AG04449 (cell line): ENCODE measurements at regions of chr7 and their contacts with region 1.

Region 1: DNA sequence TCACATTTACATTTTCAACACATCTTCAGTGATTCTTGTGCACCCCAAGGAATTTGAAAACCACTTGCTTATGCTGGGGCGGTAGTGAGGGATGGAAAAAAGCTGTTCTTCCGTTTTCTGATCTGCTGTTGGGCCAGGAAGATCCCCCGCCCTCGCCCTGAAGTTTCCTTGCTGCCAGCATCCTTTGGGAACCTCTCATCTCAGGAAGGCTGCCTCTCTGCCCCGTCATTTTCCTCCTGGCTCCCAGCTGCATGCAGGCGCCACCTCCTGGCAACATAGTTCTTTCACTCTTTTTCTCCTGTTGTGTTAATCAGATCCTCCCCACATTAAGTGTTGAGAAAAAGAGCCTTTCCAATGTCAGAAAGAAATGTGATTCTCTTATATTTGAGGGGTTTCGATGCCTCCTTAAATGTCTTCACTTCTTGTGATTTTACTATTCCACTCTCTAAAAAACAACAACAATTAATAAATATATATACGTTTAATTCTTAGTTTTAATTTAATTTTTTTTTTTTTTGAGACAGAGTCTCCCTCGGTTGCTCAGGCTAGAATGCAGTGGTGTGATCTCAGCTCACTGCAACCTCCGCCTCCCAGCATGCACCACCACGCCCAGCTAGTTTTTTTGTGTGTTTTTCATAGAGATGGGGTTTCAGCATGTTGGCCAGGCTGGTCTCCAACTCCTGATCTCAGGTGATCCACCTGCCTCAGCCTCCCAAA is 122.9 kb downstream of the RALA start:
- DNase-seq: no peak
- H3K4me3 ChIP-seq: no peak overlapping the region
- CTCF ChIP-seq: peak; percentile 83

Region 2: GRCh38 chr7:39547336-39547735 is 198.9 kb before region 1 on chr7:
- CTCF ChIA-PET with region 1: no interaction called
- POLR2A ChIA-PET with region 1: no interaction called
- DNase-seq: no peak
- H3K4me3 ChIP-seq: no peak overlapping the region
- CTCF ChIP-seq: no peak

Region 3: GRCh38 chr7:39589323-39590111 is 156.7 kb before region 1 on chr7:
- CTCF ChIA-PET with region 1: interaction called, 24 read pairs
- POLR2A ChIA-PET with region 1: no interaction called
- DNase-seq: no peak
- H3K4me3 ChIP-seq: no peak overlapping the region
- CTCF ChIP-seq: no peak

Region 4: DNA sequence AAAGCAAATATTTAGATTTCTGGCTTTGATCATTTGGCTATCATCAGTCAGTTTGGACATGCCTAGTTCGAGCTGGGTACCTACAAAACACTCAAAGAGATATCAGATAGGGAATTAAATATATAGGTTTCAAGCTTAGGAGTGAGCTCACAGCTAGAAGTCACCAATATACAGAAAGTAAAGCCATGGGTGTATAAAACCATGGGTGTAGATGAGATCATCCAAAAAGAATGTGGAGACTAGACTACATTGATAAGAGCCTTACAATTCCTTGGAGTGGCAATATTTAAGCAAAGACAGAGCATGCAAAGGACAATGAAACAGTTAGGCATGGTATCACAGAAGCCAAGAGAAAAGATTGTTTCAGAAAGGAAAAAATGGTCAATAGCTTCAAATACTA is 130.1 kb before region 1 on chr7:
- CTCF ChIA-PET with region 1: interaction called, 11 read pairs
- POLR2A ChIA-PET with region 1: no interaction called
- DNase-seq: no peak
- H3K4me3 ChIP-seq: no peak overlapping the region
- CTCF ChIP-seq: no peak

Region 5: GRCh38 chr7:39623018-39623731 is 123.1 kb before region 1 on chr7 and contains the start of gene RALA:
- CTCF ChIA-PET with region 1: interaction called, 11 read pairs
- POLR2A ChIA-PET with region 1: no interaction called
- DNase-seq: peak; percentile 55
- H3K4me3 ChIP-seq: peak within 1 kb of the TSS; percentile 77
- CTCF ChIP-seq: no peak

Region 6: DNA sequence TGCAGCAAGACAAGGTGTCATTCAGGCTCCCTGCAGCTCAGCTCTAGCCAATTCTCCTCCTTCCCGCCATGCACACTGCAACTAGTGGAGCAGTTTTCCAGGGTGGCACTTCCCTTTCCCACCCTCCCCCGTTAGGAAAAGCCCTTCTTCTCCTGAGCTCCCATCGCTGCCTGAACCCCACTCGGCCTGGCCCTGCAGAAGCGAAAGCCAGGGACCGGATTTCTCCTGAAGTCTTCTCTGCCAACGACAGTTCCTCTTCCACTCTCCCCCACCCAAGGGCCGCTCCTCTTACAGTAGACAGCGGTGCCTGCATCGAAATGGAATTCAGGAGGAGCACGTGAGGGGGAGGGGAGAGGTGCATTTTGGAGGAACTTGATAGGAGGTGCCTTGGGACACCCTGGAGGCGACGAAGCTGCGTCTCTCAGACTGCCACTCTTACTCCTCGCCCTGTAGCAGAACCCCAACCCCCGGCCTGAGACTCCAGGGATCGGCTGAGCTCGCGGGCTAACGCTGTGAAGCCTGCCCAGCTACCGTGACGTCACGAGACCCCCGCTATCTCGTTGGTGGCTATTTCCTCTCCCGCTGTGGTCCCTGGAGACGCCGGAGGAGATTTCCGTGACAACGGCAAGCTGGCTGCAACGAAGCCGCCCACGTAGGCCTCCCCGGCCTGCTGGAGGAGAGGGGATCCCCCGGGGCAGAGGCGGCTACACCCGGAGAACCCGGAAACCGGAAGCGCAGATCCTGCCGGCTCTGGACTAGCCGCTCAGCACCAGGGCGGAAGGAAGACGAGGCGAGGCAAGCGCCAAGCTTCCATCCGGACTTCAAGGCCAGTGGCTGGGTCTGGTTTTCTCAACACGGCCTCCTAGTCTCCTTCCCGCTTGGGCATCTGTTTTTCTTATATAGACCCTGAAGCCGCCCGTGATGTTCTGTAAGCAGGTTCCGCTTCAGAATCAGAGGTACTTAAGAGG is 13.1 kb before region 1 on chr7:
- CTCF ChIA-PET with region 1: interaction called, 77 read pairs
- POLR2A ChIA-PET with region 1: interaction called, 3 read pairs
- DNase-seq: peak; percentile 79
- H3K4me3 ChIP-seq: peak overlapping the region; percentile 71
- CTCF ChIP-seq: no peak